Activated T-helper 2 cell treated with anti-CD3 and anti-CD28 coated beads, Interferon-gamma antibody, Interleukin-2, Interleukin-4, amounts not matched to agents 10 μg/mL and 5 μg/mL and 100 μg/mL, durations not matched to agents 14 hours and 24 hours and 36 hours (primary cell): ENCODE measurements at regions of chr22 and their contacts with region 1.

Region 1: GRCh38 chr22:50620593-50621355 is 7.2 kb downstream of the ARSA start:
- DNase-seq: peak; percentile 73
- H3K4me3 Mint-ChIP-seq: peak overlapping the region; percentile 81
- H3K27ac Mint-ChIP-seq: peak overlapping the region; percentile 96
- H3K4me1 Mint-ChIP-seq: peaks cover 32% of the 10 kb centered on the region
- H3K27me3 Mint-ChIP-seq: no peaks in the 10 kb centered on the region

Region 2: GRCh38 chr22:50169774-50170341 is 450.9 kb before region 1 on chr22:
- intact Hi-C with region 1: no loop called
- DNase-seq: peak; percentile 37
- H3K4me3 Mint-ChIP-seq: peak overlapping the region; percentile 67
- H3K27ac Mint-ChIP-seq: no peak overlapping the region
- H3K4me1 Mint-ChIP-seq: peaks cover 12% of the 10 kb centered on the region
- H3K27me3 Mint-ChIP-seq: peaks cover 26% of the 10 kb centered on the region

Region 3: DNA sequence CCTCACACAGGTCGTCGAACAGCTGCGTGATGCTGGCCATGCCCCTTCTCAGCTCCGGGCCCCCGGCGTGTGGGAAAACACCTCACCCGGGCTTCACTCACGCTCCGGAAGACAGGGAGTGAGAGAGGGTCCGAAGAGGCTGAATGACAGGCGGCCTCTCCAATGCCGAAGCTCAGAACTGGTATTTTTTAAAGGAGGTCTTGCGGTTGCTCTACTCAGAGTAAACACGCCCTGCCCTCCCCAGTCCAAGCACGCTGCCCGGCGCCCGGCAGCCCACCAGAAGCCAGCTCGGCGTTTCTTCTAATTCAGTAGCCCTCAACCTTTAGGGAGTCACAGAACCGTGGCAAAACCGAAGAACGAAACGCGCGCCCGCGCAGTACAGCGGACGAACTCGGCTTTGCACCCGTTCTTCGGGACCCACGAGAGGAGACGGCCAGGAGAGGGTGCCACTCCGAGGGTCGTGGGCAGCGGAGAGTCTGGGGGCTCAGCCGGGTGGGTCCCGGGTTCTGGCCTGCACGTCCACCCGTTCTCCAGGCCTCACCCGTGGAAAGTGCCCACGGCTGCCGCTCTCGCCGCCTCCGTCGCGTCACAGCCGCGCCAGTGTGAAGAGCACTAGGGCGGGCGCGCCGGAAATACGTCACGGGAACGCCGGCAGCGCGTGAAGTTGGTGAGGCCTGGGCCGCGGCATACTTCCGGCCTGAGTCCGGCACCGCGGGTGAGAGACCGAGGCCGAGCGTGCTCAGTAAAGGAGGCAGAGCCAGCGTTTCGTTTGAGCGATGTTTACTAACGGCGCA is 376.2 kb before region 1 on chr22 and contains the start of gene TUBGCP6:
- intact Hi-C with region 1: loop called (anchors 2 kb)
- DNase-seq: peak; percentile 92
- H3K4me3 Mint-ChIP-seq: peak within 1 kb of the TSS; percentile 100
- H3K27ac Mint-ChIP-seq: peak within 1 kb of the TSS; percentile 100
- H3K4me1 Mint-ChIP-seq: peaks cover 12% of the 10 kb centered on the region
- H3K27me3 Mint-ChIP-seq: no peaks in the 10 kb centered on the region
- total RNA-seq, gene TUBGCP6: 48.8 and 49.6 TPM in 2 replicates

Region 4: DNA sequence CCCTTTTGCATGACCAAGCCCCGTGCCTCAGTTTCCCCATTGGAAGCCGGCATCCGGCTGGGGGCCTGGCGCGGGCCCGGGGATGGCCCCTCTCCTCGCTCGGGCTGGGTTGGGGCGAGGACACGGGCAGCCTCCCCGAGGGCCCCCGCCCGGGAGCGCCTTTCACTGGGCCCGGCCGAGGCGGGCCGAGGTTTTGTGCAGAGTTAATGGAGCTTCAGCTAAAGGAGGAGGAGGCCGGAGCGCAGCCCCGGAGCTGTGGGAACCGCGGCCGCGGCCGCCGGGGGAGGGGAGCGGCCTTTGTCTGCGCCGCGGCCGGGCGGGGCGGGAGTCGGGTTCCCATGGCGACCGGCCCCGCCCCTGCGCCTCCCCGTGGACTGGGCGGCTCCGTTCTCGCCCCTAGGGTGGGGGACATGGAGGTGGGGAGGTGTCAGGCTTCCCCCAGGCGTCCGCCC is 349.2 kb before region 1 on chr22:
- intact Hi-C with region 1: loop called (anchors 2 kb)
- DNase-seq: peak; percentile 49
- H3K4me3 Mint-ChIP-seq: no peak overlapping the region
- H3K27ac Mint-ChIP-seq: no peak overlapping the region
- H3K4me1 Mint-ChIP-seq: peaks cover 1% of the 10 kb centered on the region
- H3K27me3 Mint-ChIP-seq: peaks cover 15% of the 10 kb centered on the region

Region 5: GRCh38 chr22:50341977-50342650 is 278.7 kb before region 1 on chr22:
- intact Hi-C with region 1: loop called (anchors 5 kb)
- DNase-seq: peak; percentile 83
- H3K4me3 Mint-ChIP-seq: peak overlapping the region; percentile 75
- H3K27ac Mint-ChIP-seq: peak overlapping the region; percentile 73
- H3K4me1 Mint-ChIP-seq: peaks cover 2% of the 10 kb centered on the region
- H3K27me3 Mint-ChIP-seq: no peaks in the 10 kb centered on the region

Region 6: GRCh38 chr22:50481440-50482106 is 139.2 kb before region 1 on chr22 and contains the start of gene ADM2:
- intact Hi-C with region 1: no loop called
- DNase-seq: peak; percentile 69
- H3K4me3 Mint-ChIP-seq: peak within 1 kb of the TSS; percentile 78
- H3K27ac Mint-ChIP-seq: peak within 1 kb of the TSS; percentile 38
- H3K4me1 Mint-ChIP-seq: peaks cover 7% of the 10 kb centered on the region
- H3K27me3 Mint-ChIP-seq: peaks cover 15% of the 10 kb centered on the region
- total RNA-seq, gene ADM2: 2.2 and 2.9 TPM in 2 replicates

Region 7: GRCh38 chr22:50530877-50531545 is 89.8 kb before region 1 on chr22:
- intact Hi-C with region 1: loop called (anchors 1 kb)
- DNase-seq: peak; percentile 83
- H3K4me3 Mint-ChIP-seq: peak overlapping the region; percentile 91
- H3K27ac Mint-ChIP-seq: peak overlapping the region; percentile 98
- H3K4me1 Mint-ChIP-seq: peaks cover 38% of the 10 kb centered on the region
- H3K27me3 Mint-ChIP-seq: no peaks in the 10 kb centered on the region

Region 8: GRCh38 chr22:50537765-50538164 is 83.0 kb before region 1 on chr22:
- intact Hi-C with region 1: loop called (anchors 2 kb)
- DNase-seq: no peak
- H3K4me3 Mint-ChIP-seq: no peak overlapping the region
- H3K27ac Mint-ChIP-seq: peak overlapping the region; percentile 81
- H3K4me1 Mint-ChIP-seq: peaks cover 65% of the 10 kb centered on the region
- H3K27me3 Mint-ChIP-seq: no peaks in the 10 kb centered on the region

Region 9: DNA sequence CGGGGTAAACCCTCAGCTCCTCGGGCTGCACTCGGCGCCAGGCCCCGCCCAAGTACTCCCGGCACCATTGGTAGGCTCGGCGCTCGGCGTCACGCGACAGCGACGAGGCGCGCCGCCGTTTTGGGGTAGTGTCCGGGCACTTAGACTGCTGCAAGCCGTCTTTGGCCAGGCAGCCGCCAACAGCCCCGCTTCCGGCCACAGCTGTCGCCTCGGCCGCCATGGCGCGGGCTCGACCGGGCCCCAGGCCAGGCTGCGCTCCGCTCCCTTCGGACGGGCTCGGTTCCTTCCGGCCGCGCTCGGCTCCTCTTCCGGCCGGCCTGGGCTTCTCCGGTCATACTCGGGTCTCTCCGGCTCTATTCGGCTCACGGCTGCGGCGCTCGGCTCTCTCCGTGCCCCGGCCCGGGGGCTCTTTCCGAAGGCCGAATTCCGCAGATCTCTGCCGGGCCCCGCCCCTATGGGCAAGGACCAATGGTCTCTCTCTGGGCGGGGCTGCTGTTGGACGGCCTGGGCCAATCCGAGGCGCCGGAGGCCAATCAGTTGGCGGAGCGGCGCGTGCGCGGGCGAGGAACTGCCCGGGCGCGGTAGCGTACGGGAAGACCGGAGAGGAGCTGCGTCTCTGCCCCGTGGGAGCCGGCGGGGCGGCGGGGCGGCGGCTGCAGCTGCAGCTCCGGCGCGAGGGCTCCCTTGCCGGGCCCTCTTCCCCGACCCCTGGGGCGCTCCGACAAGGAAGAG is 38.0 kb before region 1 on chr22 and contains the start of gene CHKB:
- intact Hi-C with region 1: loop called (anchors 1 kb)
- DNase-seq: peak; percentile 99
- H3K4me3 Mint-ChIP-seq: peak within 1 kb of the TSS; percentile 94
- H3K27ac Mint-ChIP-seq: peak within 1 kb of the TSS; percentile 95
- H3K4me1 Mint-ChIP-seq: peaks cover 12% of the 10 kb centered on the region
- H3K27me3 Mint-ChIP-seq: no peaks in the 10 kb centered on the region
- total RNA-seq, gene CHKB: 86.1 and 90.9 TPM in 2 replicates